Cardiac septum (tissue), 1 donor: ENCODE measurements at regions of chr12 and their contacts with region 1.

Region 1: DNA sequence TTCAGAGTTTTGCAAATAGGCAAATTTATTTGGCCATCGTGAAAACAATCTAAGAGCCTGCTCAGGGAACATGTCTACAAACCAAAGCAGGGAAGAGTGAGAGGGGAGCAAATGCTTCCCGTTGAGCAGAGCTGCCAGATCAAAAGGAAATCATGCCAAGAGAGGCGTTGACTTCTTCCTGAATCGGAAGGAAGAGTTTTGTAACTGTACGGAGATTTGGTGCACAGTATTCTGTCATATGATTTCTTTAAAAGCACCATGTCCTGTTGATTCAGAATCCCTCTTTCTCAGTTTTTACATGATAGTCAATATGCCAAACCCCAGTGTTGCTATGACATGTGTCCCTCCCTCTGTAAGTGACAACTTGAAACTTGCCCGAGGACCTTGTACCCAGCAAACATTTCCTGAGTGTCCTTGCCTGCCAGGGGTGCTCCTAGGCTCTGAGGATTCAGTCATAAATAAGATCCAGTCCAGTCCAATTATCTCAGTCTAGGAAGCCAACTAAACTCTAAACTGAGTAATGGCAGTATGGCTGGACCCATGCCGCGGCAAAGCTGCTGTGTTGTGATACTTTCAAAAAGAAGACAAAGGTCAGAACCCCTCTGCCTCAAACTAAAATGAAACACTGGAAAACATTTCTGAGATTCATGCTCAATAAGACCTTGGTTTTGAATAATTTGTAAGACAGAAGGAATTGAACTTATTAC is 300.1 kb upstream of the FKBP4 start:
- DNase-seq: no peak

Region 2: DNA sequence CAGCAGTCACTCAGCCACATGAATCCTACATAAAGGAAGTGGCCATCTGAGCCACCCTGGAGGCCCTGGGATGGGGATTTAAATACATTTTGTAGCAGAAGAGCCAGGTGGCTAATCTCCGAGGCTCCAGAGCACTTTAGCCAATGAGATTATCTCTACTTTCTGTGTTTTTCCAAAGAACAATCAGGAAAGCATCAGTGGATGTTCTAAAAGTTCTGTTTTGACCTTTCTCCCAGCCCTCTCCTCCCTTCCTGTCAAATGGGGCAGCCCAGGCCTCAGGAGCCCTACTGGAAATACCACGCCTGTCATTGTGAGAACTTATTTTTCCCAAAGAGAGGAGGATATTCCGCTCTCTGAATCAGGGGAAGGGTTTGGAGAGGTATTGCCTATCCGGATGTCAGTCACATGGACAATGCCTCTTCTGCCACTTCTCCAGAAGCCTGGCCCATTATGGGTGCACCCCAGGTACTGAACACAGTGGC is 36.7 kb before region 1 on chr12:
- intact Hi-C with region 1: loop called (anchors 1 kb)
- DNase-seq: no peak

Region 3: GRCh38 chr12:2583091-2583497 is 88.5 kb after region 1 on chr12:
- intact Hi-C with region 1: loop called (anchors 5 kb)
- DNase-seq: peak; percentile 80

Region 4: GRCh38 chr12:2613326-2614073 is 118.9 kb after region 1 on chr12:
- intact Hi-C with region 1: no loop called
- DNase-seq: no peak